Aorta (tissue), 5 donors: ENCODE measurements at regions of chr21 and their contacts with region 1.

Region 1: GRCh38 chr21:28761674-28762356 is 230.9 kb downstream of the LTN1 start:
- DNase-seq: no peak
- ATAC-seq: no peak
- H3K4me3 ChIP-seq: no peak overlapping the region
- H3K27ac ChIP-seq: no peak overlapping the region
- H3K4me1 ChIP-seq: peaks cover 3 to 7% of the 10 kb centered on the region in 2 donors
- H3K27me3 ChIP-seq: no peaks in the 10 kb centered on the region

Region 2: DNA sequence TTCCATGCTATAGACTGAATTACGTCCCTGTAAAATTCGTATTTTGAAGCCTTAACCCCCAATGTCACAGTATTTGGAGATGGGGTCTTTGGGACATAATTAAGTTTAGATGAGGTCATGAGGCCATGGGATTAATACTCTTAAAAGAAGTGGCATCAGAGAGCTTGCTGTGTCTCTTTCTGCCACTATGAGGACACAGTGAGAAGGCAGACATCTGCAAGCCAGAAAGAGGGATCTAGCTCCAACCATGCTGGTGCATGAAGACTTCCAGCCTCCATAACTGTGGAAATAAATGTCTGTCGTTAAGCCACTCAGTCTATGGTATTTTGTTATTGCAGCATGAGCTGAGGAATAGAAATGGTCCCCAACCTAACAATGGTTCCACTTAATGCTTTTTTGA is 131.9 kb after region 1 on chr21:
- intact Hi-C with region 1: loop called in 1 of 2 experiments (anchors 5 kb)
- DNase-seq: no peak
- ATAC-seq: no peak
- H3K4me3 ChIP-seq: no peak overlapping the region
- H3K27ac ChIP-seq: peak overlapping the region in 1 of 2 donors; percentile 73
- H3K4me1 ChIP-seq: no peaks in the 10 kb centered on the region
- H3K27me3 ChIP-seq: no peaks in the 10 kb centered on the region